ENCODE measurements at regions of chr15 and their contacts with region 1.

Region 1: GRCh38 chr15:80776420-80777045 is 2.6 kb upstream of the CEMIP start:
- H3K4me3 ChIP-seq: no peak overlapping the region
- H3K27ac ChIP-seq: no peak overlapping the region
- H3K4me1 ChIP-seq: peaks cover 28% of the 10 kb centered on the region
- CTCF ChIP-seq: peak; percentile 58; the same call in 1 of the 2 replicates

Region 2: DNA sequence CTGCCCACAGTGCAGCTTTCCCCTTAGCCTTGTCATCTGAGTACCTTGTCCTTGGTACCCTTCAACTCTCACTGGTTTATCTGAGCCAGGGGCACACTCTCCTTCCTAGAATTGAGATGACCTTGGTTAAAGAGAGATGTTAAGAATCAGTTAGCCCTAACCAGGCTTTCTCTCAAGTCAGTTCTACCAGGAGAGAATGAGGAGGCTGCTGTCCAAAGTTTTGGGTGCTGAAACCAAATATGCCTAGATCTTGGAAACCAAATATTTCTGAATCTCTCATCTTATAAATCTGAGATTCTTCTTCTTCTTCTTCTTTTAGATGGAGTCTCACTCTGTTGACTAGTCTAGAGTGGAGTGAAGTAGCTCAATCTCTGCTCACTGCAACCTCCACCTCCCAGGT is 512.5 kb before region 1 on chr15:
- CTCF ChIA-PET with region 1: no interaction called
- POLR2A ChIA-PET with region 1: no interaction called
- H3K4me3 ChIP-seq: no peak overlapping the region
- H3K27ac ChIP-seq: no peak overlapping the region
- H3K4me1 ChIP-seq: no peaks in the 10 kb centered on the region
- CTCF ChIP-seq: no peak

Region 3: GRCh38 chr15:80455668-80456442 is 320.7 kb before region 1 on chr15:
- CTCF ChIA-PET with region 1: interaction called, 120 read pairs
- POLR2A ChIA-PET with region 1: no interaction called
- H3K4me3 ChIP-seq: no peak overlapping the region
- H3K27ac ChIP-seq: no peak overlapping the region
- H3K4me1 ChIP-seq: no peaks in the 10 kb centered on the region
- CTCF ChIP-seq: peak; percentile 75

Region 4: GRCh38 chr15:80613772-80614365 is 162.7 kb before region 1 on chr15:
- CTCF ChIA-PET with region 1: interaction called, 10 read pairs
- POLR2A ChIA-PET with region 1: no interaction called
- H3K4me3 ChIP-seq: no peak overlapping the region
- H3K27ac ChIP-seq: no peak overlapping the region
- H3K4me1 ChIP-seq: peaks cover 14% of the 10 kb centered on the region
- CTCF ChIP-seq: no peak

Region 5: GRCh38 chr15:80669663-80670273 is 106.8 kb before region 1 on chr15:
- CTCF ChIA-PET with region 1: interaction called, 18 read pairs
- POLR2A ChIA-PET with region 1: no interaction called
- H3K4me3 ChIP-seq: no peak overlapping the region
- H3K27ac ChIP-seq: no peak overlapping the region
- H3K4me1 ChIP-seq: no peaks in the 10 kb centered on the region
- CTCF ChIP-seq: no peak

Region 6: GRCh38 chr15:80739919-80740318 is 36.6 kb before region 1 on chr15:
- CTCF ChIA-PET with region 1: interaction called, 15 read pairs
- POLR2A ChIA-PET with region 1: no interaction called
- H3K4me3 ChIP-seq: no peak overlapping the region
- H3K27ac ChIP-seq: no peak overlapping the region
- H3K4me1 ChIP-seq: peaks cover 44% of the 10 kb centered on the region
- CTCF ChIP-seq: no peak

Region 7: DNA sequence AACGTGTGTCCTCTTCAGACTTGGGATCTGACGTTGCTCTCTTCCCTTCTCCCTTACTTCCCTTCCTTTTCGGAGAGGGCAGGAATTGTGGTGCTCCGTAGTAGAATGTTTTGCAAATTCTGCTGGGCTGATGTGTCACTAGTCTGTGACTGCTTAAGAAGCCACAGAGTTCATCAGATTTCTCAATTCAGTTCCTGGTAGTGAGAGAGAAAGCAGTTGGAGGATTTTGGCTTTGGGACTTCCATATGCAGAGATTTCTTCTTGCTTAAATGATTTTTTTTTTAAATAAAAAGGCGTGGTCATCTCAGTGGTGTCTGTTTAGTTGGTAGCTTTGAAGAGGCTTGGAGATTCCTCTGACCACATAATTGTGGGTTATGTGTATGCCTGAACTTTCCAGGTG is 12.8 kb after region 1 on chr15:
- CTCF ChIA-PET with region 1: interaction called, 17 read pairs
- POLR2A ChIA-PET with region 1: no interaction called
- H3K4me3 ChIP-seq: no peak overlapping the region
- H3K27ac ChIP-seq: no peak overlapping the region
- H3K4me1 ChIP-seq: no peaks in the 10 kb centered on the region
- CTCF ChIP-seq: no peak

Region 8: DNA sequence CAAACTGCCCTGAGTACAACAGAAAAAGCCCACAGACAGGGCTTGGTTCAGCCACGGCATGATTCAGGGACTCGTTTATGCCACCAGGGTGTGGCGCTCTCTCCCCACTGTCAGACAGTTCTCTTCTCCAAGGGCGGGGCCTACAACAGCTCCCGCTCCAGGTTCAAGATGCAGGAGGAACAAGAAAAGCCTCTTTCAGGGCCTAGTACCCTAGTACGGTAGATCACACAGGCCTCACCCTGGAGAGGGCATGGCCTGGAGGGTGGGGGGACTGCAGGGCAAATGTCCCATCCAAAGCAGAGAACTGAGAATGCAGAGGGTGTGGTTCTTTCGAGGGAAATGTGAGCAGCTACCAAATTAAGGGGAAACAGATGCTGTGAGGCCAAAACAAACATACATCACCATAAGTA is 201.1 kb after region 1 on chr15:
- CTCF ChIA-PET with region 1: interaction called, 137 read pairs
- POLR2A ChIA-PET with region 1: interaction called, 4 read pairs
- H3K4me3 ChIP-seq: no peak overlapping the region
- H3K27ac ChIP-seq: no peak overlapping the region
- H3K4me1 ChIP-seq: peaks cover 14% of the 10 kb centered on the region
- CTCF ChIP-seq: peak; percentile 81

Region 9: DNA sequence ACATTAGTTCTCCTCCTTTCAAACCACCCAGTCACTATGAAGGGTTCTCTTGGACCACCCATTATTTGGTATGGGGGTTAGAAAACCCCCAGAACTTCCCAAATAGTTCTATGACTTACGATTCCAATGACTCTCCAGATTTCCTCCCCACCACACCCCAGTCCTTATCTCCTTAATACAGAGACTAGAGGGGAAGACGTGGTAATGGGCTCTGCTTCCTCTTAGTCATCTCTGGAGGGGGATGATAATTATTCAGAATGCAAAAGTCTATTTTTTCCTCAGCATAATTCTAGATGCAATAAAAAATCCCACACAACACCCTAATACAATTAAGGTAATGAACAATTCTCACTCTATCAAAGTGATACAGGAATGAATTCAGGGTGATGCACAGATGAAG is 308.7 kb after region 1 on chr15:
- CTCF ChIA-PET with region 1: no interaction called
- POLR2A ChIA-PET with region 1: no interaction called
- H3K4me3 ChIP-seq: no peak overlapping the region
- H3K27ac ChIP-seq: no peak overlapping the region
- H3K4me1 ChIP-seq: peaks cover 6% of the 10 kb centered on the region
- CTCF ChIP-seq: no peak

Measured in HEK293 (cell line).